CD14-positive monocyte (primary cell): ENCODE measurements at regions of chr12 and their contacts with region 1.

Region 1: DNA sequence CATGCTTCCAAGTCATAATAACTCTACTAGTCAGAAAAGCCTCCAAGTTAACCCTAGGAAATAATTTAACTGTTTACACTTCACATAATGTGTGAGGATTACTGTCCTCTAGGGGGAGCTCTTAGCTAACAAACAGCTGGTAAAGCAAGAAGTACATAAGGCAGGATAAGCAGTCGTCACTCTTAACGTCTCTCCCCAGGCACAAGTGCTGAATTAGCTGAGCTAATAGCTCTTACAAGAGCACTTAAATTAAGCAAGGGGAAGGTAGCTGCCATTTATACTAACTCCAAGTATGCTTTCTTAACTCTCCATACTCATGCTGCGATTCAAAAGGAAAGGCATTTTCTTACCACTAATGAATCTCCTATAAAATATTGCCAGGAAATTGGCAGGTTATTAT is 79.3 kb upstream of the TSPAN11 start:
- DNase-seq: peak; percentile 47 to 71 (median 56)
- H3K4me3 ChIP-seq: no peak overlapping the region
- H3K4me3 Mint-ChIP-seq: no peak overlapping the region
- H3K27ac ChIP-seq: no peak overlapping the region
- H3K27ac Mint-ChIP-seq: no peak overlapping the region
- H3K4me1 ChIP-seq: peaks cover 0 to 4% of the 10 kb centered on the region in 2 donors
- H3K4me1 Mint-ChIP-seq: peaks cover 9% of the 10 kb centered on the region
- H3K27me3 ChIP-seq: no peaks in the 10 kb centered on the region
- H3K27me3 Mint-ChIP-seq: peaks cover 4 to 5% (median 5%) of the 10 kb centered on the region in 3 donors
- CTCF ChIP-seq: peak; percentile 88

Region 2: GRCh38 chr12:30806989-30807694 is 40.1 kb before region 1 on chr12:
- intact Hi-C with region 1: no loop called
- DNase-seq: peak; percentile 36 to 45 (median 42)
- H3K4me3 ChIP-seq: no peak overlapping the region
- H3K4me3 Mint-ChIP-seq: no peak overlapping the region
- H3K27ac ChIP-seq: no peak overlapping the region
- H3K27ac Mint-ChIP-seq: no peak overlapping the region
- H3K4me1 ChIP-seq: no peaks in the 10 kb centered on the region
- H3K4me1 Mint-ChIP-seq: no peaks in the 10 kb centered on the region
- H3K27me3 ChIP-seq: no peaks in the 10 kb centered on the region
- H3K27me3 Mint-ChIP-seq: peaks cover 2 to 6% (median 3%) of the 10 kb centered on the region in 3 donors
- CTCF ChIP-seq: peak; percentile 80

Region 3: DNA sequence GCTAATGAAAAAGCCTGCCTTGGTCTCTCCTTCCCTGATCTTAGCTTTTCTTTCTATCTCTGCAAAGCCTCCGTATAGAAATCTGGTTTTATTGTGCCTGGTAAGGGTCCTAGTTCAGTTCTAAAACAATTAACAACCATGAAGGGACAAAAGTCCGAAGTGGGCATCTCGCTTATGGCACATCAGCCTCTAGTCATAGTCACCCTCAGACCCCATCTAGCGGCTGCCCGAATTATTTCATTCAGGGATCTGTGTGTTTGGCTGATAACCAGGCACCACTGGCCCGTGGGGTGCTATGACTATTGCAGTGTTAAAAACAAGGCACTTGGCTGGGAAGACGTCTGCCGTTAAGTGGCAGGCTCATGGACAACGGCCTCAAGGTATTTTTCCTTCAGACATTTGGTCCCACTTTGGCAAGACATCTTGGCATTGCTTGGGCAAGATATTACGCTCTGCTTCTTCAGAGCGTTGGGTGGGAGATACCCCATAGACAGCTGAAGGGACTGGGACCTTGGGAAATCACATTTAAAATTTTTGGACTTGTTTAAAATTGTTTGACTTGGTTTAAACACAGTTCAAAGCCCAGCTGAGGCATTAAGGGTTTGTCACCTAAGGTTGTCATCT is 391.6 kb after region 1 on chr12:
- intact Hi-C with region 1: loop called in 1 of 2 experiments (anchors 10 kb)
- DNase-seq: peak in 2 of 3 donors; percentile 9 to 20
- H3K4me3 ChIP-seq: no peak overlapping the region
- H3K4me3 Mint-ChIP-seq: peak overlapping the region in 1 of 2 donors; percentile 43
- H3K27ac ChIP-seq: no peak overlapping the region
- H3K27ac Mint-ChIP-seq: no peak overlapping the region
- H3K4me1 ChIP-seq: no peaks in the 10 kb centered on the region
- H3K4me1 Mint-ChIP-seq: peaks cover 4% of the 10 kb centered on the region
- H3K27me3 ChIP-seq: no peaks in the 10 kb centered on the region
- H3K27me3 Mint-ChIP-seq: peaks cover 10 to 17% (median 13%) of the 10 kb centered on the region in 3 donors
- CTCF ChIP-seq: peak; percentile 70

Region 4: GRCh38 chr12:31274520-31275300 is 427.5 kb after region 1 on chr12:
- intact Hi-C with region 1: loop called in 1 of 2 experiments (anchors 5 kb)
- DNase-seq: no peak
- H3K4me3 ChIP-seq: no peak overlapping the region
- H3K4me3 Mint-ChIP-seq: no peak overlapping the region
- H3K27ac ChIP-seq: no peak overlapping the region
- H3K27ac Mint-ChIP-seq: no peak overlapping the region
- H3K4me1 ChIP-seq: no peaks in the 10 kb centered on the region
- H3K4me1 Mint-ChIP-seq: no peaks in the 10 kb centered on the region
- H3K27me3 ChIP-seq: no peaks in the 10 kb centered on the region
- H3K27me3 Mint-ChIP-seq: no peaks in the 10 kb centered on the region
- CTCF ChIP-seq: no peak